Activated CD4-positive, alpha-beta T cell treated with anti-CD3 and anti-CD28 coated beads for 36 hours (primary cell): ENCODE measurements at regions of chr16 and their contacts with region 1.

Region 1: GRCh38 chr16:87950765-87951549 is at the start of gene BANP:
- DNase-seq: peak; percentile 98
- ATAC-seq: peak; percentile 96
- H3K4me3 Mint-ChIP-seq: peak within 1 kb of the TSS; percentile 93
- H3K27ac Mint-ChIP-seq: peak within 1 kb of the TSS; percentile 100
- H3K4me1 Mint-ChIP-seq: peaks cover 47% of the 10 kb centered on the region
- H3K27me3 Mint-ChIP-seq: no peaks in the 10 kb centered on the region
- total RNA-seq, gene BANP: 35.2 to 36.1 TPM

Region 2: GRCh38 chr16:87765776-87766484 is 185.0 kb before region 1 on chr16 and contains the start of gene KLHDC4:
- CTCF ChIA-PET with region 1: no interaction called
- POLR2A ChIA-PET with region 1: interaction called, 3 read pairs
- intact Hi-C with region 1: loop called (anchors 1 kb)
- DNase-seq: peak; percentile 94
- ATAC-seq: peak; percentile 88
- H3K4me3 Mint-ChIP-seq: peak within 1 kb of the TSS; percentile 100
- H3K27ac Mint-ChIP-seq: peak within 1 kb of the TSS; percentile 99
- H3K4me1 Mint-ChIP-seq: peaks cover 35% of the 10 kb centered on the region
- H3K27me3 Mint-ChIP-seq: no peaks in the 10 kb centered on the region
- total RNA-seq, gene KLHDC4: 67.0 to 77.3 TPM

Region 3: DNA sequence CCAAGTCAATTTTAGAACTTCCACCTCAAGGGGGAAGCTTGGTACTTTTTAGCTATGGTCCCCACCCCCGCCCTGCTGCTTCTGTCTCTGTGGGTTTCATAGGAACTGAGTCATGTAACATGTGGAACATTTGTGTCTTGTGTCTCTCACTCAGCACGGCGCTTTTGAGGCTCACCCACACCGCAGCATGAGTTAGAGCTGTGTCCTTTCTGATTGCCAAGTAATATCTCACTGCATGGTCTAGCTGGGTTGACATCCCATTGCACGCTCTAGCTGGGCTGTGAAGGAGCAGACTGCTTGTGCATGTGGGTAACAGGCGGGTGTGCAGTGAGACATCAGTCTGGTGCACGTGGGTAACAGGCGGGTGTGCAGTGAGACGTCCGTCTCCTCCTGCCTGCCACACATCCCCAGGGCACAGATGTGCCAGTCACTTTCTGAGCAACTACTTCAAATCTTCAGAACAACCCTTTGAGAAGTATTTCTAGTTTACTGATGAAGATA is 55.3 kb before region 1 on chr16:
- CTCF ChIA-PET with region 1: interaction called, 3 read pairs
- POLR2A ChIA-PET with region 1: interaction called, 4 read pairs
- intact Hi-C with region 1: loop called in 1 of 2 experiments (anchors 1 kb)
- DNase-seq: peak; percentile 95
- ATAC-seq: peak; percentile 91
- H3K4me3 Mint-ChIP-seq: peak overlapping the region; percentile 44
- H3K27ac Mint-ChIP-seq: peak overlapping the region; percentile 99
- H3K4me1 Mint-ChIP-seq: peaks cover 56% of the 10 kb centered on the region
- H3K27me3 Mint-ChIP-seq: no peaks in the 10 kb centered on the region

Region 4: DNA sequence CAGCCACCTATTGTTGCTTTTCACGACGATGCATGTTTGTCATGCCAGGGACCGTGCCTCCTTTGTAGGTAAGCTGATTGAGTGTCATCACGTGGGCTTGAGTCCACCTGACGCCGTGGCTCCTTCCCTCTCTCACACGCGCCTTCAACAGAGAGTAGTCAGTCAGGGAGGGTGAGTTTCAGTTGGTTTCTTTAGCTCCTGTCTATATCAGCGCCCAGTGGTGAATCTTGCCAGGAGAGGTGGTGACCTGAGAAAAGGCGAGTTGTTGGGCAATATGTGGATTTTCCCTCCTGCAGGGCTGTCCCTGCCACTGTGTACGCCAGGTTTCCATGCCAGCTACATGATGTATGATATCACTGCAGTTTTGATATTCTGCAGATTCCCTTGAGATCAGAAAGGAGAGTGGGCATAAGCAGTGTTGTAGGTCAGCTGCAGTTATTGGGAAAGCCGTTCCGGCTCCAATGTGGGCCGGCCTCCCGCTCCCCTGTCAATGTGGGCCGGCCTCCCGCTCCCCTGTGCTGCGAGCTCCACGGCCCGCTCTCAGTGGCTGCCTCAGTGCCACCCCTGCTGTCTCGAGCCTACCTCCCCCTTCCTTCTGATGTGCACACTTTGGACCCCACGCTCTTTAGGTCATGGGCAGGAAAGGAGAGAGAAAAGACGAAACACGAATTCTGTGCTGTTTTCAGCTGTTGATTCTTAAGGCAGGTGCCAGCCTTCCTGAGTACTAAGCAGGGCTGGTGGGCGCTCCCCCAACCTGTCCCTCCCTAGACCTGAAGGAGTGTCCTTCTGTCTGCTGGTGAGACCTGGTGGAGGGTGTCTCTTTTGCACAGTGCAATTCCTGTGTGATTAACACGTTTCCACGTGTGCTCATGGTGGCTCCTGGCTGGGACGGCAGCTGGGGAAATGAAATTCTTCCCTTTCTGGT is 31.8 kb after region 1 on chr16:
- CTCF ChIA-PET with region 1: interaction called, 5 read pairs
- POLR2A ChIA-PET with region 1: interaction called, 7 read pairs
- intact Hi-C with region 1: loop called (anchors 1 to 5 kb)
- DNase-seq: no peak
- ATAC-seq: no peak
- H3K4me3 Mint-ChIP-seq: no peak overlapping the region
- H3K27ac Mint-ChIP-seq: peak overlapping the region; percentile 75
- H3K4me1 Mint-ChIP-seq: peaks cover 82% of the 10 kb centered on the region
- H3K27me3 Mint-ChIP-seq: no peaks in the 10 kb centered on the region

Region 5: GRCh38 chr16:88569985-88570690 is 619.2 kb after region 1 on chr16 and contains the start of gene ZC3H18:
- CTCF ChIA-PET with region 1: no interaction called
- POLR2A ChIA-PET with region 1: interaction called, 6 read pairs
- intact Hi-C with region 1: loop called (anchors 1 to 10 kb)
- DNase-seq: peak; percentile 99
- ATAC-seq: peak; percentile 83
- H3K4me3 Mint-ChIP-seq: peak within 1 kb of the TSS; percentile 88
- H3K27ac Mint-ChIP-seq: peak within 1 kb of the TSS; percentile 79
- H3K4me1 Mint-ChIP-seq: peaks cover 44% of the 10 kb centered on the region
- H3K27me3 Mint-ChIP-seq: no peaks in the 10 kb centered on the region
- total RNA-seq, gene ZC3H18: 70.0 to 76.4 TPM

Region 6: DNA sequence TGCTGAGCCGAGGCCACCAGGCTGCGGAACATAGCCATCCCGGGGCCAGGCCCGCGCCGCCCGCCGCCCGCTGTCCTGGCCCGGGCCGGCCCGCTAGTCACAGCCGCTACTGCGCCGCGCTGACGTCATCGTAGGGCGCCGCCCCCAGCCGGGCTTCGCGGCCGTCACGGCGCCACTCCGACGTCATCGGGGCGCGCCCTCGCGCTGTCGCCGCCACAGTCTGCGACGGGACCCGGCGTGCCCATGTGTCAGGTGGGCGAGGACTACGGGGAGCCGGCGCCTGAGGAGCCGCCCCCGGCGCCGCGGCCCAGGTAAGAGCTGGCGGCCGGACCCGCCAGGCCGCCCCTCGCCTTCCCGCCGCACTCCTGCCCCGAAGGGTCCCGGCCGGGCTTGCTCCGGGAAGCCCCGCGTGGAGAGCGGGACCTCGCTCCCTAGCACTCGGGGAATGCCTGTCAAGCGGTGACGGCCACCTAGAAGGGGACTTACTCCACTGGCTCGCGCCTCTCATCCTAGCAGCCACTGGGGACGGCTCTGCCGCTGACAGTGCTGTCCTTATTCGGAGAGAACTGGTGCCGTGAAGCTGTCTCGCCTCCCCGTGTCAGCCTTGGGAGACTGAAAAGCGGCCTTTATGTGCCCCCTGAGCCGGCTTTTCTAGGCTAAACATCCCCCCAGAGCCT is 755.5 kb after region 1 on chr16 and contains the starts of genes CTU2 and RNF166:
- CTCF ChIA-PET with region 1: no interaction called
- POLR2A ChIA-PET with region 1: no interaction called
- intact Hi-C with region 1: loop called in 1 of 2 experiments (anchors 2 kb)
- DNase-seq: peak; percentile 96
- ATAC-seq: peak; percentile 59
- H3K4me3 Mint-ChIP-seq: peak within 1 kb of the TSS; percentile 92
- H3K27ac Mint-ChIP-seq: peak within 1 kb of the TSS; percentile 92
- H3K4me1 Mint-ChIP-seq: peaks cover 43% of the 10 kb centered on the region
- H3K27me3 Mint-ChIP-seq: no peaks in the 10 kb centered on the region
- total RNA-seq, gene CTU2: 29.6 to 36.2 TPM
- total RNA-seq, gene RNF166: 44.0 to 49.7 TPM